Cardiac septum (tissue), 1 donor: ENCODE measurements at regions of chr7 and their contacts with region 1.

Region 1: GRCh38 chr7:149497456-149498261 is at the start of gene ZNF746:
- DNase-seq: peak; percentile 91
- total RNA-seq, gene ZNF746: 9.2 TPM

Region 2: DNA sequence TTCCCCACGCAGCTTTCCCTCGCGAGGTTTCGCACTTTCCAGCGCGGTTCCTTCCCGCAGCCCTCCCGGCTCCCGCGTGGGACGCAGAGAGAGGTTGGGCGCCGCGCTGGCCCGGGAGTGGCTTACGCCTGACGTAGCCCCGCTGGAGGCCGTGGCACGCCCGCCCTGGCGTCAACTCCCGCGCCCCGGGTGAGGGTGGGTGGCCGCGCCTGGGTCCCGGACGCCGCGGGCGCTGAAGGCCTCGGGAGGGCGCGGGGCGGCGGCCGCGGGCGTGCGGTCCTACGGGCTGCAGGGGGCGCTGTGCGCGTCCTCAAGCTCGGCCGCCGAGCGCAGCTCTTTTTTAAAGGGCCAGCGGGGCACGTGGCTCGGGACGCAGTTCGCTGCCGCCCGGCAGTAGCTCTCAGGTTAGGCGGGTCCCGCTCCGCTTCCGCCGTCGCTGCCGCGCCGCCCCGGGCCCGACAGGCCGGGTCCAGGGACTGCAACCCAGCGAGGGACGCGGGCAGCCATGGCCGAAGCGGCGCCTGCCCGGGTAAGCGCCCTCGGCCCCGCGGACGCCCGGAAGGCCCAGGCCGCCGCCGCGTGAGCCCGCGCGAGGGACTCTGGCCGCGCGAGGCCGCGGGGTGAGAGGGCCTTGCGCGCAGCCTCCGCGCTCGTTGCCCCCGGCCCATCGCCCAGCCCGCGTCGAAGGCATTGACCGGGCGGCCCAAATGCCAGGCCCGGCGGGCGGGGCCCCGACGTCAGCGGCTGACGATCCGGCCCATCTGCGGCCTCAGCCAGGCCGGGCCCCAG is 235.6 kb before region 1 on chr7 and contains the start of gene ZNF783:
- intact Hi-C with region 1: loop called (anchors 10 kb)
- DNase-seq: peak; percentile 93
- total RNA-seq, gene ZNF783: 4.3 TPM

Region 3: GRCh38 chr7:149459540-149460452 is 37.9 kb before region 1 on chr7:
- intact Hi-C with region 1: no loop called
- DNase-seq: no peak

Region 4: GRCh38 chr7:149624419-149625339 is 127.0 kb after region 1 on chr7:
- intact Hi-C with region 1: loop called (anchors 2 kb)
- DNase-seq: peak; percentile 97